Left ventricle myocardium inferior (tissue), 1 donor: ENCODE measurements at regions of chr11 and their contacts with region 1.

Region 1: DNA sequence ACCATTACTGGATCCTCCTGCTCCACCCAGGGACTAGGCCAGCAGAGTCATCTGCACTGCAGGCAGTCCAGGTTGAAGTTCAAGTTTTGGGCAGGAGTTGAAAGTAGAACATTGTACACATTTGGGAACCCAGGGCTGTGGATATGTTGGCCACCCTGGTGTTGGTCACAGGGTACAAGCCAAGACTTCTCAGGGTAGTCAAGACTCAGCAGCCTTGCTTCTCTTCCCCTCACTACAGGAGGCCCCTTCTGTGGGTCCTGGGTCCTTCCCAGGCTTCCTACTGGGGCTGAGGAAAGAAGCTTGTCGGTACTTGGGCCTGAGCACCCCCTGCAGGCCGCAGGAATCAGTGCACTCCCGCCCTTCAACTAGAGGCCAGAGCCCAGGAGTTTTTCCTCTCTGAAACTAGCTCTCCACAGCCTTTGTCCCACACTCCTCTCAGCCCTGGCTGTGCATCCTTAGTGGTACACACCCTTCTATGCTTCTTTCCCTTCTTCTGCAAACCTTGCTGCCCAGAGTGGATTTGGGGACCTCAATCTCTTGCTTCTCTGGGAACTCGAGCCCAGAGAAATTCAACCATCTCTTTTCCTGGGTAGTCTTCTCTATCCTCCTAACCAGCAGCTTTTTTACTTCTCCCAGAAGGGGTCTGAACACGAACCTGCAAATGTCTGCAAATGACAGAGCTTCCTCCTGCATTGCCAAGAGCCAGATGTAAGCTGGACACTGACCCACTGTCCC is 2.6 kb upstream of the HPX start:
- DNase-seq: peak; percentile 44
- H3K4me3 ChIP-seq: no peak overlapping the region
- H3K27ac ChIP-seq: no peak overlapping the region
- H3K4me1 ChIP-seq: no peaks in the 10 kb centered on the region
- H3K27me3 ChIP-seq: no peaks in the 10 kb centered on the region
- CTCF ChIP-seq: peak; percentile 87

Region 2: DNA sequence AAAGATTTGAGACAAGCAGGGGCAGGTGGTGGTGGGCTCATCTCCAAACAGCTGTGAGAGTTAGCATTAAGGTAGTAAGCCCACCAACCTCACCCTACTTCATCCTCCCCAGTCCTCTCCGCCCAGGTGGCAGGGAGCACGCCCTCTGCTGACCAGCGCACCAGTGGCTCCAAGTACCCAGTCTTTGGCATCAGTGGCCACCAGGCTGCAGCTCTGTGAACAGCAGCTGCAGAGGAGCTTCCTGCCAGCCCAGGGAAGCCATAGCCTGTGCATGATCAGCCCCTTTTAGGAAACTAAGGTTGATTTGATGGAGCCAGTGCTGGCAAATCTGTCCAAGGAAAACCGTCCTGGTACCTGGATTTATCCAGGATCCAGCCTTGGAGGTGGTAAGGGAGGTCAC is 144.8 kb before region 1 on chr11:
- intact Hi-C with region 1: no loop called
- DNase-seq: peak; percentile 44
- H3K4me3 ChIP-seq: no peak overlapping the region
- H3K27ac ChIP-seq: no peak overlapping the region
- H3K4me1 ChIP-seq: no peaks in the 10 kb centered on the region
- H3K27me3 ChIP-seq: peaks cover 2% of the 10 kb centered on the region
- CTCF ChIP-seq: peak; percentile 80

Region 3: DNA sequence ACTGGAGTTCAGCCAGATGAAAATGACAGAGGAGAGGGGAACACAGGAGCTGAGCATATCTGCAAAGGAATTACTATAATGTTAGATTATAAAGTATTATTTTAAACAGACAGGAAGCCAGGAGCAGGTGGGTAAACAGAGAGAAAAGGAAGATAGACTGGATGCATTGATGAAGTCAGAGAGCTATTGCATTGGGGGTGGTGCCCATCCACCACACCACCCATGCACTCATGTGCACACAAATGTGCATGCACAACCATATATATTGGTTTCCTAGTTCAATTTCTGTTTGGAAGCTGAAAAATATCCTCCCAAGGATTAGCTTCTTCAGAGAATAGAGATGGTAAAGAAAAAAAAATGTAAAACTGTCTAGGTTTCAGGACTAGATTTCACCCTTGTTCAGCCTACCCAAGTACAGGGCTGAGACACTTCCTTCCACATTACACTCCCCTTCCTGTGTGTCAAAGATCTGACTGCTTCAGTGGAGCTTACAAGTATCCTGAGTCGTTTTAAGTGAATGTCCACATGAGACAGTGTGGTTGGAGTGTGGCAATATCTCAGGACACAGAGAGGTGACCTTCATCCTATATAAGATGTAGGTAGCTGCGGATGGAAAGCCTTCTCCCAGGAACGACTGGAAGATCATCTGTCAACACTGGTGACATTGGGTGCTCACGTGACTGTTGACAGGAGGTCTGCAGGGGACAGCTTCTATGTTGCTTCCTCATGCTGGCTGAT is 65.4 kb before region 1 on chr11:
- intact Hi-C with region 1: loop called (anchors 5 kb)
- DNase-seq: no peak
- H3K4me3 ChIP-seq: no peak overlapping the region
- H3K27ac ChIP-seq: peak overlapping the region; percentile 51
- H3K4me1 ChIP-seq: peaks cover 12% of the 10 kb centered on the region
- H3K27me3 ChIP-seq: no peaks in the 10 kb centered on the region
- CTCF ChIP-seq: no peak

Region 4: DNA sequence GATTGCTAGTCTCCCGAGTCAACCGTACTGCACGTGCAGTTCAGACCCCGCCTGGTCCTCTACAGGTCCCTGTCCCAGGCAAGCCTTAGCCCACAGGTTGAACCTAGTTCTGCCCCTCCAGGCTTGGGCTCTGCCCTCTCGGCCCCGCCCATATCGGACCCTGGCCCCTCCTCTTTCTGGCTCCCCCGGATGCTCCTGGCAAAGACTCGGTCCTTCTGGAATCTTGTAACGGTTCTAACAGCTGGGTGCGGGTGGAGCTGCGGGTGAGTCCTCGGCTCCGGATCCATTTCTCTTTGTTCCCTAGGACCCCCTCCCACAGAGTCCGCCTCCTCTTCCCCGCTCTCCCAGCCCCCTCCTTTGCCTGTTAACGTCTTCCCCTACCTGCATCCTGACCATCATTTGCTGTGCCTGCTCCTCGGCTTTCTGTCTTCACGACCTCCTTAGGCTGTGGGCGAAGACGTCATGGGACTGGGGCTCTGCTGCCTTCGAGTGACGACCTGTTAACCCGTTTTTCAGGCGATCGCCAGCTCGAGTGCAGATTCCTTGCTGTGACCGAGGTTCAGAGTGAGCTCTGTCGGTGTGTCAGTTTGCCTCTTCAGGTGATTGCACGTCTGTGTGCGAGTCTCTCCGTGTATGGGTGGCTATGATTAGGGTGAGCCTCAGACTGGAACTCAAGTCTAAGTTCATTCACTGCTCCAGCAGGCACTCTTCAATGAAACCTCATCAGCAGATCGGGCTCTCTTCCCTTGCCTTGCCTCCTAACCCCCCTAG is 53.8 kb after region 1 on chr11 and contains the start of gene DNHD1:
- intact Hi-C with region 1: loop called (anchors 10 kb)
- DNase-seq: no peak
- H3K4me3 ChIP-seq: peak within 1 kb of the TSS; percentile 38
- H3K27ac ChIP-seq: peak within 1 kb of the TSS; percentile 28
- H3K4me1 ChIP-seq: peaks cover 14% of the 10 kb centered on the region
- H3K27me3 ChIP-seq: no peaks in the 10 kb centered on the region
- CTCF ChIP-seq: no peak
- total RNA-seq, gene DNHD1: 4.4 TPM